PC-3 (cell line): ENCODE measurements at regions of chr14 and their contacts with region 1.

Region 1: DNA sequence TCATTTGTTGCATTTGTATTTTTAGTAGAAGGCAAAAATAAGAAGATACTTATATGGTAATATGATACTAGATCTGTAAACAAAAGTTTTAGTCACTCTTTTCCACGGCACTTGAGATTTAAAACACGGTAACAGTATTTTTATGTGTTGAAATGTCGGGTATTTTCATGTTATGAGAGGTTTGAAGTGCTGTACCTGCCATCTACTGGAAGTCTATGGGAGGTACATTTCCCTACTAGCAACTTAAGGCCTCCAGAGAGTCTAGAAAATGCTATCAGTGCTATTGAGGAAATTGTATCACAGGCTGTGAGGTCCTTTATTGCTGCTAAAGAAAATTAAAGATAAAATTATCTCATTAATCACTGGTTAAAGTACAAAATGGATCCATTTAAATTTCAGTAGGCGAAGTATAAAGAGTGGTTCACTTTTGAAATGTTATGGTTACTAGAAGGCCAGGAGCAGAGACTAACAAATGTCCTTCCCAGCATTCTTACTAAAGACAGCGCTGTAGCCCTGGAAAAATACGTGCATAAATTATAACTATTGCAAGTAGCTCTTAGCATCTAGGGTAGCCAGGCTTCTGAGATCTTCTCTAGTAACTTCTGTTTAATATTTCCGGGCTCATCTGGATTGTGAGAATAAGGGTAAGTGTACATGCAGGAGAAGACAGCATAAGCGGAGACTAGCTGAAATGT is 77.6 kb upstream of the PRKD1 start:
- DNase-seq: peak; percentile 60
- ATAC-seq: peak; percentile 93
- H3K4me3 ChIP-seq: no peak overlapping the region
- H3K27ac ChIP-seq: no peak overlapping the region
- H3K4me1 ChIP-seq: 0 out of 2 replicates have a peak, but pooled peaks cover 4% of the 10 kb centered on the region
- H3K27me3 ChIP-seq: peaks cover 6% of the 10 kb centered on the region
- CTCF ChIP-seq: peak; percentile 86

Region 2: DNA sequence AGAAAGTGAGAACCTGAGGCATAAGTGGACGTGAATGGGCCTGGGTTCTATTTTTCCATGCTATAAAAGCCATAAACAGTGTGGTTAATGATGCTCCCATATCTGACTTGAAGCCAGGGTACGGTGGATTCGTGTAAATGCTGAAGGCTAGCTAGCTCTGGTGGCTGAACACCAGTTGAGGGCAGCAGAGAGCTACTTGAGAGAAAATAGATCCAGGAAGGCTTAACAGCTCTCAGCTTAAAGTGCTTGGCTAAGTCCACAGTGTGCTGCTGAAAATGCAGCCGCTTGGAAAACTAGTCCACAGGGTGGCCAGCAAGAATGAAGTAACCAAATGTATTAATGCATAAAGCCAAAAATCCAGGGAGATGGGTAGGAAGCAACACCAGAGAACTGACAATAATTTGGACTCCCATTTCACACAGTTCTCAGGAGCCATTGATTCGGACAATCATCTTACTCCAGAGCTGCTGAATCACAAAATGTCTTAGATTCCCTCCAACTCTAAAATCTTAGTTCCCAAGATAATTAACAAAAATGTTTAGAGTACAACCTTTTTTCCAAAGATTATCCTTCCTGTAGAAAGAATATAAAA is 1253.7 kb before region 1 on chr14:
- CTCF ChIA-PET with region 1: no interaction called
- POLR2A ChIA-PET with region 1: no interaction called
- intact Hi-C with region 1: loop called (anchors 1 kb)
- DNase-seq: peak; percentile 81
- ATAC-seq: peak; percentile 90
- H3K4me3 ChIP-seq: no peak overlapping the region
- H3K27ac ChIP-seq: no peak overlapping the region
- H3K4me1 ChIP-seq: no peaks in the 10 kb centered on the region
- H3K27me3 ChIP-seq: peaks cover 23% of the 10 kb centered on the region
- CTCF ChIP-seq: peak; percentile 84

Region 3: GRCh38 chr14:29548948-29549370 is 456.3 kb before region 1 on chr14:
- CTCF ChIA-PET with region 1: no interaction called
- POLR2A ChIA-PET with region 1: no interaction called
- intact Hi-C with region 1: loop called (anchors 1 kb)
- DNase-seq: peak; percentile 77
- ATAC-seq: peak; percentile 89
- H3K4me3 ChIP-seq: no peak overlapping the region
- H3K27ac ChIP-seq: no peak overlapping the region
- H3K4me1 ChIP-seq: no peaks in the 10 kb centered on the region
- H3K27me3 ChIP-seq: peaks cover 7% of the 10 kb centered on the region; the same call in 1 of the 2 replicates
- CTCF ChIP-seq: peak; percentile 71

Region 4: DNA sequence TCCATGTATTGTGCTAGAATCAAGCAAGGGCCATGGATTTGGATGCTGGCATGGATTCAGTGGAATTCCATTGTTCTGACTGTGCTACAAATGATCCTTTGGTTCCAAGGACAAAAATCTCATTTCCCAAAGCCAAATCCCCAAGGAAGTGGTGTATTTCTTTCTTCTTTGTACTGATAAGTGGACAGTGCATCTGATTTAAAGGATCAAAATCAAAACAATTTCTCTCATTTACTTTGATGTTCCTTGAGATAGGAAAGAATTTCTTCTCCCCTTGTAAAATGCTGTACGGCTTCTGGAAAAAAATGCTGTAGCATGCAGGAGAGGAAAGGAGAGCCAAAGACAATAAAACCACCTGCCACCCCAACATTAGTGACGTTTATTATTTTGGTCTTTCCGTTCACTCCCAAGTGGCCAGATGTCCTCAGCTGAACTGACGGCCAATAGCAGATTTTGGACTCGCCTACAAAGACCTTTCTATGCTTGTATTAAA is 263.3 kb before region 1 on chr14:
- CTCF ChIA-PET with region 1: no interaction called
- POLR2A ChIA-PET with region 1: no interaction called
- intact Hi-C with region 1: loop called (anchors 10 kb)
- DNase-seq: no peak
- ATAC-seq: no peak
- H3K4me3 ChIP-seq: no peak overlapping the region
- H3K27ac ChIP-seq: no peak overlapping the region
- H3K4me1 ChIP-seq: no peaks in the 10 kb centered on the region
- H3K27me3 ChIP-seq: no peaks in the 10 kb centered on the region
- CTCF ChIP-seq: no peak

Region 5: DNA sequence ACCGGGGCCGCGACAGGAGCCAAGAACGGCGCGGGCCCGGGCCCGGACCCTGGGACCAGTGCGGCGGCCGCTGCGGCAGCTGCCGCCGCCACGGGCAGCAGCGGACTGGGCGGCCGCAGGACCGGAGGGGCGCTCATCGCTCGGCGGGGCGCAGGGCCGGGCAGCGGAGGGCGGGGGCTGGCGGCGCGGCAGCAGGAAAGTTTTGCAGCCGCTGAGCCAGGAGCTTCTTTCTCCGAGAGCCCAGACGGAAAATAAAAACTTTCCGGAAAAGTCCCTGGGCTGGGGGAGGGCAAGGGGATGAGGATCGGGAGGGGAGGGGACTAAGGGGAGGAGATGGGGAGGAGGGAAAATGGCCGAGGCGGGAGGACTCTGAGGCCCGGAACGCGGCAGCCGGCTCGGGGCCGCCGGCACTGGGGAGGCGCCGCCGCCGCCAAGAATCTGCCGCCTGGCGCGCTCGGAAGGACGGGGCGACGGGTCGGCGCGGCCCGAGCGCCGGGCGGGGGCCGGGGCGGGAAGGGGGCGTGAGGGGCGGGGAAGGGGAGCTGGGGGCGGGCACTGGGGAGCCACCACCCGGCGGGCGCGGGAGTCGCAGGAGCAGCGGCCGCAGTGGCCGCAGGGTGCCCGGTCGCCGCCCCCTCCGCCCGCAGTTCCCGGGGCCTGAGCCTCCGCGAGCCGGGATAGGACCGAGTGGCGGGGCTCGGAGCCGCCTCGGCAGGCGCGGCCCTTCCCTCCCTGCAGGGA is 77.7 kb before region 1 on chr14 and contains the start of gene PRKD1:
- CTCF ChIA-PET with region 1: no interaction called
- POLR2A ChIA-PET with region 1: no interaction called
- intact Hi-C with region 1: loop called (anchors 5 kb)
- DNase-seq: peak; percentile 42
- ATAC-seq: peak; percentile 54
- H3K4me3 ChIP-seq: peak within 1 kb of the TSS; percentile 74
- H3K27ac ChIP-seq: no peak within 1 kb of the TSS
- H3K4me1 ChIP-seq: peaks cover 18% of the 10 kb centered on the region
- H3K27me3 ChIP-seq: no peaks in the 10 kb centered on the region
- CTCF ChIP-seq: no peak
- total RNA-seq, gene PRKD1: 1.2 and 3.0 TPM in 2 replicates

Region 6: GRCh38 chr14:29941401-29941800 is 63.9 kb before region 1 on chr14:
- CTCF ChIA-PET with region 1: no interaction called
- POLR2A ChIA-PET with region 1: no interaction called
- intact Hi-C with region 1: no loop called
- DNase-seq: no peak
- ATAC-seq: no peak
- H3K4me3 ChIP-seq: no peak overlapping the region
- H3K27ac ChIP-seq: no peak overlapping the region
- H3K4me1 ChIP-seq: no peaks in the 10 kb centered on the region
- H3K27me3 ChIP-seq: no peaks in the 10 kb centered on the region
- CTCF ChIP-seq: no peak

Region 7: GRCh38 chr14:29955087-29955486 is 50.2 kb before region 1 on chr14:
- CTCF ChIA-PET with region 1: no interaction called
- POLR2A ChIA-PET with region 1: no interaction called
- intact Hi-C with region 1: no loop called
- DNase-seq: no peak
- ATAC-seq: no peak
- H3K4me3 ChIP-seq: no peak overlapping the region
- H3K27ac ChIP-seq: no peak overlapping the region
- H3K4me1 ChIP-seq: no peaks in the 10 kb centered on the region
- H3K27me3 ChIP-seq: no peaks in the 10 kb centered on the region
- CTCF ChIP-seq: no peak

Region 8: GRCh38 chr14:30214461-30215090 is 209.3 kb after region 1 on chr14:
- CTCF ChIA-PET with region 1: no interaction called
- POLR2A ChIA-PET with region 1: no interaction called
- intact Hi-C with region 1: loop called (anchors 1 kb)
- DNase-seq: peak; percentile 74
- ATAC-seq: peak; percentile 79
- H3K4me3 ChIP-seq: no peak overlapping the region
- H3K27ac ChIP-seq: no peak overlapping the region
- H3K4me1 ChIP-seq: no peaks in the 10 kb centered on the region
- H3K27me3 ChIP-seq: no peaks in the 10 kb centered on the region
- CTCF ChIP-seq: peak; percentile 89

Region 9: DNA sequence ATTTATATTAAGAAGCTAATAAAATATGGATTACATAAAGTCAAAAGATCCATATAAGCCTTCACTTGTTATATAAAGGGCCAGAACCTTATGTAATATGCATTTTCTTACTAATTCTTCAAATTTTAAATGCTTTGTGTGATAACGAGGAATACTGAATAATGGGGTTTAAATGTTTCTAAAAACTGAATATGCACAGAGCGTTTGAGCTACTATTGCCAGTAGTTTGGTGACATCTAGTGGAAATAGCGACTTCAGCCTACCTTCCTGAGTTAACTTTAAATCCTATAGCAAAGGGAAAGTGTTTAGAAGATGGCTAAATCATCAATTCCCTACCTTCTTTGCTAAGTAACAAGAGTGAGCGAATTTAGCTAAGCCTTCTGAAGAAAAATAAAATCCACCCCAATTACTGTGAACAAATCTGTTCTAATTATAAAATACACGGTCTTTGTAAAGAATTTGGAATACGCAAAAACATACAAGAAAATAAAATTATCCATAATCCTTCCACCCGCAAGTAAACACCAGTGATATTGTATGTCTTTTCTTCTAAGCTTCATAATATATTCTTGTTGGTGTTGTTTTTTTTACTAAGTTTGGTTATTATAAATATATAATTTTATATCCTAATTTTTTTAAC is 438.2 kb after region 1 on chr14:
- CTCF ChIA-PET with region 1: no interaction called
- POLR2A ChIA-PET with region 1: no interaction called
- intact Hi-C with region 1: loop called (anchors 2 kb)
- DNase-seq: peak; percentile 73
- ATAC-seq: peak; percentile 67
- H3K4me3 ChIP-seq: no peak overlapping the region
- H3K27ac ChIP-seq: no peak overlapping the region
- H3K4me1 ChIP-seq: no peaks in the 10 kb centered on the region
- H3K27me3 ChIP-seq: peaks cover 44% of the 10 kb centered on the region
- CTCF ChIP-seq: peak; percentile 82